PC-9 (cell line): ENCODE measurements at regions of chr5 and their contacts with region 1.

Region 1: DNA sequence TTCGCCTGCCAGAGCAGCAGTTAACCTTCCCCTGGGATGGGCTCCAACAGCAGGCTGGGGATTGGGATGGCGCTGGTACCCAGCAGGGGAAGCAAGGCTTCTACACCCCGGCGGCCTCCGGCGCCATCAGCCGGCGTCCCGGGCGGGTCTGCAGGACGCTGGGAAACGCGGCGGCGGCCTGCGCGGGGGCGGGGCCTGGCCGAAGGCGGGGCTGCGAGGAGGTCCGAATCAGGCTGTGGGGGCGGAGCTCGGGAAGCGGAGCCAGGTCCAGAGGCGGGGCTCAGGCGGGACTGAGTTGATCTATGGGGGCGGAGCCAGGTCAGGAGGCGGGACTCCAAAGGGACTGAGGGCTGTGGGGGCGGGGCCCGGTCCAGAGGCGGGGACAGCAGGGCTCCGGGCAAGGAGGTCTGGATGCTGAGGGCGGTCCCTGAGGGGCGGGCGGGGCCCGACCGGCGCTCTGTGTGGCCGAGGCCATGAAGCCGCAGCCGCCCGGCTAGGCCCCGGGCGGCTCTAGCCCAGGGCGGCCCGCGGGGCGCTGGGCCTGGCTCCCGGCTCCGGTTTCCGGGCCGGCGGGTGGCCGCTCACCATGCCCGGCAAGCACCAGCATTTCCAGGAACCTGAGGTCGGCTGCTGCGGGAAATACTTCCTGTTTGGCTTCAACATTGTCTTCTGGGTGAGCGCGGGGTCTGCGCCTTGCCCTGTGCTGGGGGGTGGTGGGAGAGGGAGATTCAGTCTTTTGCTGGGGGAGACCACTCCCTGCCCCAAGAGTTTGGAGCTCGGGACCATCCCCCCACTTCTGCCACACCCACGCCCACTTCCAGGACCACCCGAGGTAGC is at the start of gene TSPAN17:
- DNase-seq: peak; percentile 91 to 100
- H3K4me3 ChIP-seq: peak within 1 kb of the TSS; percentile 90
- H3K27ac ChIP-seq: no peak within 1 kb of the TSS
- H3K4me1 ChIP-seq: peaks cover 11% of the 10 kb centered on the region
- H3K27me3 ChIP-seq: no peaks in the 10 kb centered on the region
- CTCF ChIP-seq: no peak; the same call in 1 of the 2 replicates
- total RNA-seq, gene TSPAN17: 81.1 and 82.1 TPM in 2 replicates

Region 2: GRCh38 chr5:176388444-176389134 is 258.7 kb before region 1 on chr5 and contains the starts of genes HIGD2A and NOP16:
- CTCF ChIA-PET with region 1: no interaction called
- POLR2A ChIA-PET with region 1: no interaction called
- intact Hi-C with region 1: loop called (anchors 10 kb)
- DNase-seq: peak; percentile 95 to 98
- H3K4me3 ChIP-seq: peak within 1 kb of the TSS; percentile 74
- H3K27ac ChIP-seq: peak within 1 kb of the TSS; percentile 71
- H3K4me1 ChIP-seq: peaks cover 22% of the 10 kb centered on the region
- H3K27me3 ChIP-seq: no peaks in the 10 kb centered on the region
- CTCF ChIP-seq: no peak
- total RNA-seq, gene HIGD2A: 133 and 149 TPM in 2 replicates
- total RNA-seq, gene NOP16: 31.5 and 35.8 TPM in 2 replicates

Region 3: DNA sequence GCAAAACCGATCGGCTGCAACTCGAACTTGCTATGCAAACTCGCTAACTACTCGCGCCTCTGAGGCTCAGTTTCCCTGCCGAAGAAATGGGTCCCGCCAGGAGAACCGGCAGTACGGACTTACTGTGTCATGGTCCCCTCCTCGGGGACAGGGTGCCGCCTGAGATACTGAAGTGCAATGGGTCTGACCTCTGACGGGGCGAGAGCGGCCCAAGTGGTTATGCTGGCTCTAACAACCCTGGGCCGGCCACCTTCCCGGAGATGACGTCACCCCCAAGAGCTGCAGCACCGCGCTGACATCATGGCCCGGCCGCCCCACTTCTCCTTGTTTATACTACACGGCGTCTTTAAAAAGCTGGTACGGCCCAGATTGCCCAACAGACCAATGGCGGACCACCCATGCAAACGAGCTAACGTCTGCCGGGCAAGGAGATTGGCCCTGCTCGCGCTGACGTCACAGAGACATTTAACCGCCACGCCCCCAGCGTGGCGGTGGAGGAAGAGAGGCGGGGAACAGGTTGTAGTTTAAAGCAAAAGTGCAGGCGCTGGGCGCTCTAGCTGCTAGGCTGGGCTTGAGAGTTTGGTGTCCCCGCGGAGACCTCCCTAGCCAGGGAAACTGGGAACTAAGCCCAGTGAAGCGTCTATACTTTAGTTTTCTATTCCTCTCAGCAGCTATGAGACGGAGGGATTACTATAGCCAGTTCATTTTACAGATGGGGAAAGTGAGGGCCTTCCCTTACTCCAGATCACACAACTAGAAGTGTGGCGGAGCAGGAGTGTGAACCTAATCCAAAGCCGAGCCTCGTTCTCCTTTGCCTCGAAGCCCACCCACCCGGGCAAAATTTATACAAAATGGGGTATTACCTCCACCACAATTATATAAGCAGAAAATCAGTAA is 109.4 kb before region 1 on chr5:
- CTCF ChIA-PET with region 1: no interaction called
- POLR2A ChIA-PET with region 1: interaction called, 3 read pairs
- intact Hi-C with region 1: loop called (anchors 1 kb)
- DNase-seq: peak; percentile 98 to 99
- H3K4me3 ChIP-seq: peak overlapping the region; percentile 99
- H3K27ac ChIP-seq: peak overlapping the region; percentile 79
- H3K4me1 ChIP-seq: peaks cover 33% of the 10 kb centered on the region
- H3K27me3 ChIP-seq: no peaks in the 10 kb centered on the region
- CTCF ChIP-seq: no peak

Region 4: DNA sequence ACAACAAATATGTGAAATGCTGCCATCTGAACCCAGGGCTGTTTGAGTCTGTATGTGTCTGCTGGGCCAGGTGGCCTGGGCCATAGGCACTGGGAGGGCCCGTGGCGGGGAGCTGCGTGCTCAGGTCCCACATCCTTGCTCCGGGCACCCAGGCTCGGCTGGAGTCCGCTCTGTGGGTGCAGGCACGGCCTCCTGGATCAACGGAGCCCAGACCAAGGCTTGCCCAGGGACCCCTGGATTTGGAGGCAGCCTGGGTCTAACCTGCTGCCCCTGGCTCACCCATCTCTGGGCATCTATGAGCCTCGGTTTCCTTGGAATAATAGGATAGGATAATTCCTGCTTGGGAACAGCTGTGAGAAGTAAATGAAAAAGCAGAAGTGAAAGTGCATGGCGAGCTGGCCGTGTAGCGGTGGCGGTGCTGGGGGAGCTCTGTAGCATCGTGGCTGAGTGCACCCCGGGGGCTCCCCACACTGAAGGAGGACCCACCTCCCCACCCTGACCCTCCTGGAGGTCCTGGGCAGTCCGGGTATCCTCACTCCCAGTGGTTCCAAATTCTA is 96.9 kb before region 1 on chr5:
- CTCF ChIA-PET with region 1: no interaction called
- POLR2A ChIA-PET with region 1: no interaction called
- intact Hi-C with region 1: no loop called
- DNase-seq: no peak
- H3K4me3 ChIP-seq: no peak overlapping the region
- H3K27ac ChIP-seq: no peak overlapping the region
- H3K4me1 ChIP-seq: peaks cover 55% of the 10 kb centered on the region
- H3K27me3 ChIP-seq: no peaks in the 10 kb centered on the region
- CTCF ChIP-seq: no peak

Region 5: GRCh38 chr5:176609724-176610434 is 37.4 kb before region 1 on chr5 and contains the start of gene GPRIN1:
- CTCF ChIA-PET with region 1: no interaction called
- POLR2A ChIA-PET with region 1: no interaction called
- intact Hi-C with region 1: loop called (anchors 1 kb)
- DNase-seq: peak in 1 of 2 experiments; percentile 73
- H3K4me3 ChIP-seq: peak within 1 kb of the TSS; percentile 71
- H3K27ac ChIP-seq: no peak within 1 kb of the TSS
- H3K4me1 ChIP-seq: peaks cover 17% of the 10 kb centered on the region; the same call in 1 of the 2 replicates
- H3K27me3 ChIP-seq: no peaks in the 10 kb centered on the region
- CTCF ChIP-seq: peak; percentile 39; the same call in 1 of the 2 replicates
- total RNA-seq, gene GPRIN1: 7.2 and 11.0 TPM in 2 replicates

Region 6: GRCh38 chr5:176762489-176762888 is 115.2 kb after region 1 on chr5:
- CTCF ChIA-PET with region 1: no interaction called
- POLR2A ChIA-PET with region 1: no interaction called
- intact Hi-C with region 1: no loop called
- DNase-seq: peak in 1 of 2 experiments; percentile 45
- H3K4me3 ChIP-seq: no peak overlapping the region
- H3K27ac ChIP-seq: no peak overlapping the region
- H3K4me1 ChIP-seq: peaks cover 9% of the 10 kb centered on the region; the same call in 1 of the 2 replicates
- H3K27me3 ChIP-seq: peaks cover 18% of the 10 kb centered on the region
- CTCF ChIP-seq: no peak

Region 7: DNA sequence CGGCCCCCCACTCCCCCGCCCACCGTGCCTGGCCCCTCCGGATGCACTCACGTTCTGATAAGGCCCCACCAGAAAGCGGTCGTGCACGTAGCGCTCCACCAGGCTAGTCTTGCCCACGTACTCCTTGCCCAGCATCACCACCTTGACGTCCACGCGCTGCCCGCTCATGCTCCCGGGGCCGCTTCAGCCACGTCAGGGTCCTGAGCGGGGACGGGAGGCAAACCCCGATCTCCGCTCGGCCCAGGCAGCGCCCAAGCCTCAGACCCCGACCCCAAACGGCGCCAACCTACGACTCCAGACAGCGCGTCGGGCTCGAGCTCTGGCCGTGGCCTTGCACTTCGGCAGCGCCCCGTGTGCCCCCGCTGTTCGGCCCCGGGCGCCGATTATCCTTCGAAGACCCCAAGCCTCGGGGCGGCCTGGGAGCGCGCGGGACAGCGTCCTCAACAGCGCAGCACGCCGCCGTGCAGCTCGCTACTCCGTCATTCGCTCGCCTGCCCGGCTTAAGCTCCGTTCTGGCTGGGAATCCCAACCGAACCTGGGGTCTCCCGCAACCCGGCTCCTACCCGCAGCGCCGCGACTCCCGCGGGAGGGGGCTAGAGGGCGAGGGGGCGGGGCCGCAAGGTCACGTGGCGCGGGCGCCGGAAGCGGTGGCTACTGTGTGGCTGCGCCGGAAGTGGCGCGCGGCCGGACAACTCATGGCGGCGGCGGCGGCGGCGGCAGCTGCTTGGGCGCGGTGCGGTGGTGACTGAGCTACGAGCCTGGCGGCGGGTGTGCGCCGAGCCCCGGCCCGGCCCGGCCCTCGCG is 656.1 kb after region 1 on chr5 and contains the starts of genes PRELID1 and RAB24:
- CTCF ChIA-PET with region 1: no interaction called
- POLR2A ChIA-PET with region 1: no interaction called
- intact Hi-C with region 1: loop called (anchors 5 kb)
- DNase-seq: peak; percentile 61 to 91
- H3K4me3 ChIP-seq: peak within 1 kb of the TSS; percentile 100
- H3K27ac ChIP-seq: peak within 1 kb of the TSS; percentile 39
- H3K4me1 ChIP-seq: peaks cover 40% of the 10 kb centered on the region
- H3K27me3 ChIP-seq: no peaks in the 10 kb centered on the region
- CTCF ChIP-seq: no peak; the same call in 1 of the 2 replicates
- total RNA-seq, gene PRELID1: 189 and 209 TPM in 2 replicates
- total RNA-seq, gene RAB24: 16.9 and 25.2 TPM in 2 replicates